Naive thymus-derived CD4-positive, alpha-beta T cell (primary cell): ENCODE measurements at regions of chr6 and their contacts with region 1.

Region 1: GRCh38 chr6:30326526-30327260 is at the start of gene TRIM39:
- DNase-seq: peak; percentile 88 to 94 (median 92)
- ATAC-seq: peak; percentile 76
- H3K4me3 ChIP-seq: peak within 1 kb of the TSS; percentile 70
- H3K4me3 Mint-ChIP-seq: peak within 1 kb of the TSS; percentile 93 to 99 (median 97)
- H3K27ac ChIP-seq: peak within 1 kb of the TSS; percentile 100
- H3K27ac Mint-ChIP-seq: peak within 1 kb of the TSS; percentile 92 to 100 (median 99)
- H3K4me1 ChIP-seq: peaks cover 34 to 48% of the 10 kb centered on the region in 2 donors
- H3K4me1 Mint-ChIP-seq: peaks cover 42 to 70% (median 63%) of the 10 kb centered on the region in 7 donors
- H3K27me3 ChIP-seq: no peaks in the 10 kb centered on the region
- H3K27me3 Mint-ChIP-seq: no peaks in the 10 kb centered on the region
- total RNA-seq, gene TRIM39: 12.8 to 42.1 (median 26.4) TPM

Region 2: DNA sequence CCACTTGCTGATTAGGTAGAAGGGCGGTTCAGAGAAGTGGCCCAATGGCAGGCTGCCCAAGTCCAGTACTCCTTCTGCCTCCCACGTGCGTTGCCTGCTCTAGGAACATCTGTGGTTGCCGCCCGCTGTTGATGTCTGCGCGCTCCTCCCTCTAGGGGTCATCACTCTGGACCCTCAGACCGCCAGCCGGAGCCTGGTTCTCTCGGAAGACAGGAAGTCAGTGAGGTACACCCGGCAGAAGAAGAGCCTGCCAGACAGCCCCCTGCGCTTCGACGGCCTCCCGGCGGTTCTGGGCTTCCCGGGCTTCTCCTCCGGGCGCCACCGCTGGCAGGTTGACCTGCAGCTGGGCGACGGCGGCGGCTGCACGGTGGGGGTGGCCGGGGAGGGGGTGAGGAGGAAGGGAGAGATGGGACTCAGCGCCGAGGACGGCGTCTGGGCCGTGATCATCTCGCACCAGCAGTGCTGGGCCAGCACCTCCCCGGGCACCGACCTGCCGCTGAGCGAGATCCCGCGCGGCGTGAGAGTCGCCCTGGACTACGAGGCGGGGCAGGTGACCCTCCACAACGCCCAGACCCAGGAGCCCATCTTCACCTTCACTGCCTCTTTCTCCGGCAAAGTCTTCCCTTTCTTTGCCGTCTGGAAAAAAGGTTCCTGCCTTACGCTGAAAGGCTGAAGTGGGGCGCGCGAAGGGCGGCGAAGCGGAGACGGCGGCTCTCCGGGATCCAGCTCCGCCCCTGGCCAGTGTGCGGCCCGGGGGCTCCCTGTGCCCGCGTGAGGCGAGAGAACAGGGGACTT is 154.8 kb before region 1 on chr6:
- CTCF ChIA-PET with region 1: no interaction called
- POLR2A ChIA-PET with region 1: no interaction called
- intact Hi-C with region 1: no loop called
- DNase-seq: peak in 1 of 9 donors; percentile 8
- ATAC-seq: no peak
- H3K4me3 ChIP-seq: no peak overlapping the region
- H3K4me3 Mint-ChIP-seq: peak overlapping the region in 6 of 10 donors; percentile 16 to 70 (median 48)
- H3K27ac ChIP-seq: no peak overlapping the region
- H3K27ac Mint-ChIP-seq: no peak overlapping the region
- H3K4me1 ChIP-seq: peaks cover 0 to 3% of the 10 kb centered on the region in 2 donors
- H3K4me1 Mint-ChIP-seq: peaks cover 0 to 32% (median 4%) of the 10 kb centered on the region in 7 donors
- H3K27me3 ChIP-seq: peaks cover 12 to 13% of the 10 kb centered on the region in 2 donors
- H3K27me3 Mint-ChIP-seq: peaks cover 61 to 78% (median 74%) of the 10 kb centered on the region in 5 donors

Region 3: DNA sequence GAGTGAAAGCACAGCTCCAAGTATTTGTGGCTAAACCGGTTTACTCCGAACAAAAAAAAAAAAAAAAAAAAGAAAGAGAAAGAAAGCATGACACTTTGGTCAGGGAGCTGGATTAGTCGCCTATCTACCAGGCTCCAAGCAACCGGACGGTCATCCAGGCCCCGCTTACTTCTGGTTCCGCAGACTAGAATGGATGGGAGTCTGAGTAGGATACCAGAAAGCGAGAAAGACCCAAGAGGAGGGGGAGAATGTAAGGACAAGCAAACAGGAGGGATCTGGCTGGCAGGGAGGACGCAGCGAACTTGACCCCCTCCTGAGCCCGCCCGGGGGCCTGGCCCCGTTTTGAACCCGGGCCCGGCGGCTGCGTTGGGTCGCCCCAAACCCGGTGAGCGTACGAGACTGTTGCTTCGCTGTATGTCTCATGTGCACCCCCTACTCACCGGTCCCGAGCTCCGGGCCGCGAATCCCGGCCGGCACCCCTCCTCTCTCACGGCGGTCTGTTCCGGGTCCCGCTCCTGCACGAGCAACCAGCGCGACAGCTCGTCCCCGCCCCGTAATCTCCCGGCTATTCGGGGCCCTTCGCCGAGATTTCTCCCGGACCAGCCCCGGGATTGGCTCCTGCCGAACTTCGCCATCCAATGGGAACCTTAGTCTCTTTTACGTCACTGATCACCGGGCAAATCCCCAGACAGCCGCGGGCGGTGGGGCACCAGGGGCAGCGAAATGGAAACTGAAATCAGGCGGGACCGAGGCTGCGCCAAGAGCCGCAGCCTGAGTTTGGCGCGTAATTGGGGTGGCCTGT is 113.6 kb before region 1 on chr6 and contains the start of gene TRIM26:
- CTCF ChIA-PET with region 1: interaction called, 3 read pairs
- POLR2A ChIA-PET with region 1: interaction called, 41 read pairs
- intact Hi-C with region 1: loop called (anchors 1 kb)
- DNase-seq: peak; percentile 88 to 99 (median 97)
- ATAC-seq: peak; percentile 94
- H3K4me3 ChIP-seq: peak within 1 kb of the TSS; percentile 83
- H3K4me3 Mint-ChIP-seq: peak within 1 kb of the TSS; percentile 89 to 100 (median 96)
- H3K27ac ChIP-seq: peak within 1 kb of the TSS; percentile 99
- H3K27ac Mint-ChIP-seq: peak within 1 kb of the TSS; percentile 96 to 100 (median 99)
- H3K4me1 ChIP-seq: peaks cover 32 to 39% of the 10 kb centered on the region in 2 donors
- H3K4me1 Mint-ChIP-seq: peaks cover 47 to 62% (median 52%) of the 10 kb centered on the region in 7 donors
- H3K27me3 ChIP-seq: no peaks in the 10 kb centered on the region
- H3K27me3 Mint-ChIP-seq: peaks cover 0 to 5% (median 0%) of the 10 kb centered on the region in 5 donors
- total RNA-seq, gene TRIM26: 40.1 to 73.1 (median 49.1) TPM

Region 4: DNA sequence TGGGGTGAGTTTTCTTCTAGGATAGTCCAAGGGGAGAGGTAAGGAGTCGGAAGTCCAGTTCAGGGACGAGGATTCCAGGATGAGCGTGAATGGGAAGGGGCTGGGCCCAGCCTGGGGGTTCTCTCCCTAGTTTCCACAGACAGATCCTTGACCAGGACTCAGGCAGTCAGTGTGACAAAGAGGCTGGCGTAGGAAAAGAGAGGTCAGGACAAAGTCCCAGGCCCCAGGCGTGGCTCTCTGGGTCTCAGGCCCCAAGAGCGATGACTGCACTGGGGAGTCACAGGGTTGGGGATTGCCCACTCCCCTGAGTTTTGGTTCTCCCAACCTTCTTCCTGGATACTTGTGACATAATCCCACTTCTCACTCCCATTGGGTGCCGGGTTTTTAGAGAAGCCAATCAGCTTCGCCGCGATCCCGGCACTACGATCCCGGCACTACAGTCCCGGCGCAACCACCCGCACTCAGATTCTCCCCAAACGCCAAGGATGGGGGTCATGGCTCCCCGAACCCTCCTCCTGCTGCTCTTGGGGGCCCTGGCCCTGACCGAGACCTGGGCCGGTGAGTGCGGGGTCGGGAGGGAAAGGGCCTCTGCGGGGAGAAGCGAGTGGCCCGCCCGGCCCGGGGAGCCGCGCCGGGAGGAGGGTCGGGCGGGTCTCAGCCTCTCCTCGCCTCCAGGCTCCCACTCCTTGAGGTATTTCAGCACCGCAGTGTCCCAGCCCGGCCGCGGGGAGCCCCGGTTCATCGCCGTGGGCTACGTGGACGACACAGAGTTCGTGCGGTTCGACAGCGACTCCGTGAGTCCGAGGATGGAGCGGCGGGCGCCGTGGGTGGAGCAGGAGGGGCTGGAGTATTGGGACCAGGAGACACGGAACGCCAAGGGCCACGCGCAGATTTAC is 67.3 kb before region 1 on chr6:
- CTCF ChIA-PET with region 1: no interaction called
- POLR2A ChIA-PET with region 1: no interaction called
- intact Hi-C with region 1: loop called in 1 of 2 experiments (anchors 2 kb)
- DNase-seq: peak; percentile 42 to 68 (median 53)
- ATAC-seq: peak; percentile 93
- H3K4me3 ChIP-seq: peak overlapping the region; percentile 79
- H3K4me3 Mint-ChIP-seq: peak overlapping the region; percentile 78 to 97 (median 90)
- H3K27ac ChIP-seq: peak overlapping the region; percentile 78
- H3K27ac Mint-ChIP-seq: peak overlapping the region in 8 of 9 donors; percentile 65 to 91 (median 78)
- H3K4me1 ChIP-seq: peaks cover 5 to 6% of the 10 kb centered on the region in 2 donors
- H3K4me1 Mint-ChIP-seq: peaks cover 7 to 17% (median 13%) of the 10 kb centered on the region in 7 donors
- H3K27me3 ChIP-seq: no peaks in the 10 kb centered on the region
- H3K27me3 Mint-ChIP-seq: peaks cover 0 to 35% (median 0%) of the 10 kb centered on the region in 5 donors

Region 5: GRCh38 chr6:30344868-30345671 is 18.4 kb after region 1 on chr6 and contains the start of gene RPP21:
- CTCF ChIA-PET with region 1: no interaction called
- POLR2A ChIA-PET with region 1: interaction called, 6 read pairs
- intact Hi-C with region 1: loop called (anchors 1 kb)
- DNase-seq: peak; percentile 74 to 91 (median 86)
- ATAC-seq: peak; percentile 99
- H3K4me3 ChIP-seq: peak within 1 kb of the TSS; percentile 77
- H3K4me3 Mint-ChIP-seq: peak within 1 kb of the TSS; percentile 81 to 94 (median 89)
- H3K27ac ChIP-seq: peak within 1 kb of the TSS; percentile 97
- H3K27ac Mint-ChIP-seq: peak within 1 kb of the TSS; percentile 84 to 97 (median 92)
- H3K4me1 ChIP-seq: peaks cover 0 to 12% of the 10 kb centered on the region in 2 donors
- H3K4me1 Mint-ChIP-seq: peaks cover 12 to 32% (median 24%) of the 10 kb centered on the region in 7 donors
- H3K27me3 ChIP-seq: no peaks in the 10 kb centered on the region
- H3K27me3 Mint-ChIP-seq: peaks cover 0 to 7% (median 0%) of the 10 kb centered on the region in 5 donors
- total RNA-seq, gene RPP21: 39.7 to 61.2 (median 44.9) TPM

Region 6: DNA sequence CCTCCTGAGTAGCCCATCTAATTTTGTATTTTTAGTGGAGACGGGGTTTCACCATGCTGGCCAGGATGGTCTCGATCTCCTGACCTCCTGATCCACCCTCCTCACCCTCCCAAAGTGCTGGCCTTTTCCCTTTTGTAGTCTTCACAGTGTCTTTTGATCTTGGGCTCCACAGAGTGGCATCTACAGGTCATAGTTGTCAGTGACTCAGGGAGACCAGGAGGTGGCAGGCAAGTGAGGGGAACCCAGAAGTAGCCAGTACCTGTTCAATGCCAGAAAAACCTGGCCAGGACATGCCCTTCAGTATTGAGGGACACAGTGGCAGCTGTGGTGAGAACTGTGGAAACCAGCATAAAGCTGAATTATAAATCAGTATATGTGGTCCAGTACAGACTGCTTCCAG is 37.9 kb after region 1 on chr6:
- CTCF ChIA-PET with region 1: no interaction called
- POLR2A ChIA-PET with region 1: no interaction called
- intact Hi-C with region 1: no loop called
- DNase-seq: no peak
- ATAC-seq: no peak
- H3K4me3 ChIP-seq: no peak overlapping the region
- H3K4me3 Mint-ChIP-seq: no peak overlapping the region
- H3K27ac ChIP-seq: no peak overlapping the region
- H3K27ac Mint-ChIP-seq: no peak overlapping the region
- H3K4me1 ChIP-seq: no peaks in the 10 kb centered on the region
- H3K4me1 Mint-ChIP-seq: no peaks in the 10 kb centered on the region
- H3K27me3 ChIP-seq: peaks cover 0 to 5% of the 10 kb centered on the region in 2 donors
- H3K27me3 Mint-ChIP-seq: peaks cover 43 to 82% (median 71%) of the 10 kb centered on the region in 5 donors